ENCODE measurements at regions of chr10 and their contacts with region 1.

Region 1: DNA sequence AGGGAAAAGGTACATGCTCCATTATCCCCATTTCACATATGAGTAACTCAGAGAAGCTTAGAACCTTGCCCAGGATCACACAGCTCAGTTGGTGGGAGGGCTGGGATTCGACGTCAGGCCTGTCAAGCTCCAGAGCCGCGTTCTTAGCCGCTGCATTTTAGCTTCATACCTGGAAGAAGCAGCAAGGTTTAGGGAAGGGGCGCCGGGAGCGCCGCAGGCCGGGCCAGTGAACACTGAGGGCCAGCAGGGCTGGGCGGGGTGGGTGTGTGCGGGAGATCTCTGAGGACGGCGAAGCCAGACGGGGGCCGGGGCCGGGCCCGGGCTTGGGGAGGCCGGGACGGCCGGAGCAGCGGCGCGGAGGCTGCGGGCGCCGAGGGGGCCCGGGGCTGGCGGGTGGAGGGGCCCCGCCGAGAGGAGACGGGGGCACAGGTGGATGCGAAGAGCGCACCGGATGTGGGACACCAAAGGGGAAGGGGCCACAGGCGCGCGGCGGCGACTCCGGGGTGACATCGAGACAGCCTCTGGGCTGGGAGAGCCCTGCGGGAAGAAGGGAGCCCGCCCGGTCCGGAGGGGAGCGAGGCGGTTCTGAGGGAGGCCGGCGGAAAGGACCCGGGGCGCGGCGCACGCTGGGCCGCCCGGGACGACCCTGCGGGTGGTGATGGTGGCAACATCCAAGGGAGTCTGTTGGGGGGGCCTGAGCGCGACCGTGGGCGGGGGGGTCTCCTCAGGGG is 498 bp downstream of the NDST2 start:
- DNase-seq: peak; percentile 89
- H3K4me3 Mint-ChIP-seq: peak overlapping the region; percentile 87
- H3K27ac Mint-ChIP-seq: peak overlapping the region; percentile 94
- H3K4me1 Mint-ChIP-seq: peaks cover 43% of the 10 kb centered on the region
- H3K27me3 Mint-ChIP-seq: no peaks in the 10 kb centered on the region

Region 2: GRCh38 chr10:73730153-73730906 is 80.6 kb before region 1 on chr10:
- intact Hi-C with region 1: loop called (anchors 1 kb)
- DNase-seq: peak; percentile 99
- H3K4me3 Mint-ChIP-seq: peak overlapping the region; percentile 100
- H3K27ac Mint-ChIP-seq: peak overlapping the region; percentile 99
- H3K4me1 Mint-ChIP-seq: peaks cover 4% of the 10 kb centered on the region
- H3K27me3 Mint-ChIP-seq: no peaks in the 10 kb centered on the region

Region 3: GRCh38 chr10:73785221-73785720 is 25.6 kb before region 1 on chr10 and contains the start of gene ZSWIM8:
- intact Hi-C with region 1: loop called (anchors 1 kb)
- DNase-seq: peak; percentile 94
- H3K4me3 Mint-ChIP-seq: peak within 1 kb of the TSS; percentile 91
- H3K27ac Mint-ChIP-seq: peak within 1 kb of the TSS; percentile 98
- H3K4me1 Mint-ChIP-seq: peaks cover 39% of the 10 kb centered on the region
- H3K27me3 Mint-ChIP-seq: no peaks in the 10 kb centered on the region
- total RNA-seq, gene ZSWIM8: 50.8 and 53.5 TPM in 2 replicates

Region 4: DNA sequence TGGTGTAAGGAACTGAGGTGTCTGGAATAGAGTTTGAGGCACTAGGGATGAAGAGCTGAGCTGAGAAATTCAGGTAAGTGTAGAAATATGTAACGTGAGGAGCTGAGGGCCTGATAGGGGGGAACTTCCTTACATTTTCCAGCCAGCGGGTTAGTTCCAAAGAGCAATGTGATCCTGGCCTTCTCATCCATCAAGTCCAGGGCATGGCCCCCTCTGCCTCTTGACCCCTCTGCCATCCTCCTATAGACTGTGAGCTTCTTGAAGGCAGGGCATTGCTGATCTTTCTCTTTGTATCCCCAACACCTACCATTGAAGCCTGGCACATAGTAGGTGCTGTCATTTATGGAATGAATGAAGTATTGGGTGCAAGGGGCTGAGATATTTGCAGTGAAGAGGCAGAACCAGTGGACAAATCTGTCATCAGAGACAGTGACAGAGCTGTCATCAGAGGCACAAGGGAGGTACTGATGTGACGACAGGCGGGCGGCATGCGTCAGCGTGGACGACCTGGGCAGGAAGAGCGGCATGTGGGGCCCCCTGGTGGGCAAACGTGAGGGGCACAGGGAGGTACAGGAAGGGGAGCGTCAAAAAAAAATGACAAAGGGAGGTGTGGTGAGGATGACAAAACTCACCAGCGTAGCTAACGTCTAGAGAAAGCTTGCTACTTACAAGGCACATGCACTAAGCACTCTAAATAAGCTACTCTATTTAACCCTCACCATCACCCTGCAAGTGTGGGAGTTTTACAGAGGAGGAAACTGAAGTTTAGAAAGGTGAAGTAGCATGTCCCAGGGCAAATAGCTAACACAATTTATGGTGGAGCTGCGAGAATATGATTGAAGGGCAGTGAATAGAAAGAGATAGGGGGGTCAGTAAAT is 68.6 kb after region 1 on chr10:
- intact Hi-C with region 1: loop called (anchors 1 kb)
- DNase-seq: peak; percentile 98
- H3K4me3 Mint-ChIP-seq: peak overlapping the region; percentile 3
- H3K27ac Mint-ChIP-seq: peak overlapping the region; percentile 61
- H3K4me1 Mint-ChIP-seq: peaks cover 31% of the 10 kb centered on the region
- H3K27me3 Mint-ChIP-seq: peaks cover 4% of the 10 kb centered on the region

Measured in activated CD4-positive, alpha-beta T cell treated with anti-CD3 and anti-CD28 coated beads, Interleukin-2, amount 10 ng/mL, durations not matched to agents 24 days and 14 days (primary cell).